Ovary (tissue), 10 donors: ENCODE measurements at regions of chr18 and their contacts with region 1.

Region 1: GRCh38 chr18:1124495-1124894 is 219.8 kb downstream of the ADCYAP1 start:
- DNase-seq: no peak
- H3K4me3 ChIP-seq: no peak overlapping the region
- H3K27ac ChIP-seq: no peak overlapping the region
- H3K4me1 ChIP-seq: no peaks in the 10 kb centered on the region
- H3K27me3 ChIP-seq: no peaks in the 10 kb centered on the region
- CTCF ChIP-seq: no peak
- EP300 ChIP-seq: no peak
- POLR2A ChIP-seq: no peak

Region 2: DNA sequence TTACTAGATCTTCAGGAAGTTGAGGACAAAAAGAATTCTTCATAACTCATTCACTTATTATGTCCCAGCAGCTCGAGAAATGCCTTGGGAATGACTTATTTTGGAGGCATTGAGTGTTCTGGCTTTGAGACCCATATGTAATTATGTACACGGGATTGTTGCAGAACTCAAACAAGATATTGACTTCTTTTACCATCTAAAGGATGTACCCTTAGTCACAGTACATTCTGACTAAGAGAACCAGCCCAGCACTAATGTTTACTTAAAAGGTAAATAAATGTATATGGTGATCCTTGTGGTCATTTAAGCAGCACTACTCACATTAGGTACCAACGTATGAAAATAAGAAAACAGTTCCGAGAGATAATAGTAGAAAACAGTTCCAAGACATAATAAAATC is 49.1 kb after region 1 on chr18:
- intact Hi-C with region 1: loop called in 1 of 4 experiments (anchors 10 kb)
- DNase-seq: no peak
- H3K4me3 ChIP-seq: no peak overlapping the region
- H3K27ac ChIP-seq: no peak overlapping the region
- H3K4me1 ChIP-seq: no peaks in the 10 kb centered on the region
- H3K27me3 ChIP-seq: no peaks in the 10 kb centered on the region
- CTCF ChIP-seq: no peak
- EP300 ChIP-seq: no peak
- POLR2A ChIP-seq: no peak